ENCODE measurements at regions of chr3 and their contacts with region 1.

Region 1: GRCh38 chr3:138332472-138333076 is 2.9 kb upstream of the NME9 start:
- DNase-seq: peak; percentile 26
- H3K4me3 ChIP-seq: no peak overlapping the region
- H3K27ac ChIP-seq: no peak overlapping the region
- H3K4me1 ChIP-seq: peaks cover 11 to 22% (median 17%) of the 10 kb centered on the region in 4 donors
- H3K27me3 ChIP-seq: no peaks in the 10 kb centered on the region
- CTCF ChIP-seq: peak; percentile 63 to 68 (median 65)
- EP300 ChIP-seq: no peak
- POLR2A ChIP-seq: no peak

Region 2: DNA sequence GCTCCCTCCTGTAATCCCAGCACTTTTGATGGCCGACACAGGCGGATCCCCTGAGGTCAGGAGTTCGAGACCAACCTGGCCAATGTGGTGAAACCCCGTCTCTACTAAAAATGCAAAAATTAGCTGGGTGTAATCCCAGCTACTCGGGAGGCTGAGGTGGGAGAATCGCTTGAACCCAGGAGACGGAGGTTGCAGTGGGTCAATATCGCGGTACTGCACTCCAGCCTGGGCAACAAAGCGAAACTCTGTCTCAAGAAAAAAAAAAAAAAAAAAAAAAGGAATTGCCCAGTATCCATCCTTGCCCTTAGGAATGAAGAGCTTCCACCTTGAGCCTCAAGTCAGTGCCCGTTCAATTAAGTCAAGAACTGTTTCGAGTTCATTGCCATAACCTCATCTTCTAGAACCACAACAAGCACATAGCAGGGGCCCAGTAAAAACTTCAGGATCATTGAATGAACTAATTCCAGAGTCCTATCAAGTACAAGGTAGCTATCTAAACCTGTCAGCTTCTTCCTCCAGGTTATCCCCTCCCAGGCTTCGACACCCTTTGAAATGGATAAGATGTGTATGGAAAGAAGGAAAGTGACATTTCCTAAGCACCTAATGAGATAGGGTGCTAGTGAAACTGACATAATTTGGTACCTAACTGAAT is 158.7 kb before region 1 on chr3:
- intact Hi-C with region 1: no loop called
- DNase-seq: no peak
- H3K4me3 ChIP-seq: peak overlapping the region; percentile 70 to 91 (median 78)
- H3K27ac ChIP-seq: peak overlapping the region; percentile 79 to 83 (median 80)
- H3K4me1 ChIP-seq: peaks cover 13 to 30% (median 28%) of the 10 kb centered on the region in 4 donors
- H3K27me3 ChIP-seq: no peaks in the 10 kb centered on the region
- CTCF ChIP-seq: no peak
- EP300 ChIP-seq: no peak
- POLR2A ChIP-seq: no peak

Region 3: DNA sequence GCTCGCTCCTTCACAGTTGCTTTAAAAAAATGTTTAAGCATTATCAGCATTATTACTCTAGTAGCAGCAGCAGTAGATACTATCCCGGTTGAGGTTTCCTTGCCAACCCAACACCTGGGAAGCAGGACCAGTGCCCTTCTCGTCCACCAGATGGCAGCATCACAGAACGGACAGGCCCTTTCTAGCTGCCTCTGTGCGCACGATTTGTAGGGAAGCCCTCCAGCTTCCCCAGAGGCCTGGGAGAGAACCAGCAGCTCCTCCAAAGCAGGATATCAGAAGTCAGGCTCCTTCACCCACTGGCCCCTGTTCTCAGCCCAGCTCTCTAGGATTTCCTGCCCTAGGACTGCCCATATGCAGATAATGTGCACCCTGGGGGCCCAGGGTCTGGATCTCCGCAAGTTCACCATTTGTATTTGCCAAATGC is 85.0 kb after region 1 on chr3:
- intact Hi-C with region 1: loop called (anchors 5 kb)
- DNase-seq: no peak
- H3K4me3 ChIP-seq: no peak overlapping the region
- H3K27ac ChIP-seq: no peak overlapping the region
- H3K4me1 ChIP-seq: peaks cover 0 to 8% (median 1%) of the 10 kb centered on the region in 4 donors
- H3K27me3 ChIP-seq: peaks cover 0 to 12% (median 0%) of the 10 kb centered on the region in 4 donors
- CTCF ChIP-seq: peak; percentile 82 to 98 (median 88)
- EP300 ChIP-seq: no peak
- POLR2A ChIP-seq: no peak

Measured in esophagus muscularis mucosa (tissue), 4 donors.